Common myeloid progenitor, CD34-positive (primary cell): ENCODE measurements at regions of chr7 and their contacts with region 1.

Region 1: GRCh38 chr7:16431646-16432424 is 10.5 kb upstream of the CRPPA start:
- DNase-seq: peak; percentile 50 to 70 (median 65)
- H3K4me3 ChIP-seq: no peak overlapping the region
- H3K27ac ChIP-seq: no peak overlapping the region
- H3K4me1 ChIP-seq: peaks cover 0 to 10% (median 1%) of the 10 kb centered on the region in 4 experiments
- H3K27me3 ChIP-seq: no peaks in the 10 kb centered on the region

Region 2: DNA sequence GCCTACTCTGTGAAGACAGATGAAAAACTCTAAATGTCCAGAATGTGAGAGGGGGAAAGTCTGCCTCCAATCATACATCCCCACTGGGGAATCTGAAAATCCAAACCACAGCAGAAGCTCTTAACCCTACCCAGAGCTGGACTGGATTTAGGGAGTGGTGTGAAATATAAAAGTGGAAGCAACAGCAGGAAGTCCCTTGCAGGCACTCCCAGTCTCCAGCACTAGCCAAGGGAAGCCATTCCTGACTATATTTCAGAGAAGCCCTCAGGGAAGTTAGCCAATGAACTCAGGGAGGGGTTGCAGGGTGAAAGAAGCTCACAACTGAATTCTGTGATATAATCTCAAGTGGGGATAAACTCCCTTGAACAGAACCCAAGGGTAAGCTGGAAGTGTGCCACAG is 62.0 kb before region 1 on chr7:
- CTCF ChIA-PET with region 1: no interaction called
- POLR2A ChIA-PET with region 1: no interaction called
- DNase-seq: no peak
- H3K4me3 ChIP-seq: no peak overlapping the region
- H3K27ac ChIP-seq: no peak overlapping the region
- H3K4me1 ChIP-seq: peaks cover 0 to 11% (median 7%) of the 10 kb centered on the region in 4 experiments
- H3K27me3 ChIP-seq: no peaks in the 10 kb centered on the region

Region 3: DNA sequence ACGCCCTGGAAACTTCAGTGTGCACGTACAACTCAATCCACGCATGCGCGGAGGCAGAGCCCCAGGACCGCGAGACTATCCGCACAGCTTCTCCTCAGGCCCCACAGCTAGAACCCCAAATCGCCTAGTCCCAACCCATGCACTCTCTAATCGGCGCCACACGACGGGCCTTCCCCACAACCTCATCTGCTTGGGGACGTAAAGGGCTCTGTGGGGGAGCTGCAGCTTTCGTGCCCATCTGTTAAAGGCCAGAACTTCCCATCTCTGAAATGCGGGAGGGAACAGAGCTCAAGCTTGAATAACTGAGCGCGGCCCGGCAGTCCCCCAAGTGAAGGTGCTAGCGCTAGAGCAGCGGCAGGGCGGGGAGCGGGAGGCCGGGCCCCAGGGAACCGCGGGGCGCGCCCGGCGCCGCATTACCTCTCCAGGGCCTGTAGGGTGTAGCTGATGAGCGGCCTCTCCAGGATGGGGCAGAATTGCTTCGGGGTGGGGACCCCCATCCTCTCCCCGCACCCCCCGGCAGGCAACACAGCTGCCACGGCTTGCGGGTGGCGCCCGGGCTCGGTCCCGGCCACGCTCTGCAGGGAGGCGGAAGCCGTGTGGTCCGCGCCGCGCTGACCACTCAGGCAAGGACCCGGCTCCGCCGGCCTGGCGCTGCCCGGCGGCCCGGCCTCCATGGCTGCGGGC is 11.0 kb before region 1 on chr7:
- CTCF ChIA-PET with region 1: interaction called, 21 read pairs
- POLR2A ChIA-PET with region 1: no interaction called
- DNase-seq: peak; percentile 88 to 96 (median 94)
- H3K4me3 ChIP-seq: peak overlapping the region; percentile 63 to 81 (median 71)
- H3K27ac ChIP-seq: peak overlapping the region; percentile 80 to 91
- H3K4me1 ChIP-seq: peaks cover 8 to 40% (median 24%) of the 10 kb centered on the region in 4 experiments
- H3K27me3 ChIP-seq: no peaks in the 10 kb centered on the region

Region 4: GRCh38 chr7:16559497-16560179 is 127.8 kb after region 1 on chr7:
- CTCF ChIA-PET with region 1: interaction called, 53 read pairs
- POLR2A ChIA-PET with region 1: no interaction called
- DNase-seq: peak in 1 of 3 donors; percentile 16
- H3K4me3 ChIP-seq: no peak overlapping the region
- H3K27ac ChIP-seq: no peak overlapping the region
- H3K4me1 ChIP-seq: peaks cover 0 to 18% (median 4%) of the 10 kb centered on the region in 4 experiments
- H3K27me3 ChIP-seq: no peaks in the 10 kb centered on the region

Region 5: GRCh38 chr7:16564909-16565426 is 133.1 kb after region 1 on chr7:
- CTCF ChIA-PET with region 1: interaction called, 53 read pairs
- POLR2A ChIA-PET with region 1: no interaction called
- DNase-seq: peak; percentile 56 to 75 (median 75)
- H3K4me3 ChIP-seq: no peak overlapping the region
- H3K27ac ChIP-seq: no peak overlapping the region
- H3K4me1 ChIP-seq: peaks cover 0 to 19% (median 4%) of the 10 kb centered on the region in 4 experiments
- H3K27me3 ChIP-seq: no peaks in the 10 kb centered on the region